Activated B cell treated with CpG ODN at 0.5 μM for 24 hours (primary cell): ENCODE measurements at regions of chr11 and their contacts with region 1.

Region 1: GRCh38 chr11:44538375-44539054 is 26.9 kb upstream of the CD82 start:
- DNase-seq: peak; percentile 67
- ATAC-seq: peak; percentile 97
- H3K4me3 Mint-ChIP-seq: no peak overlapping the region
- H3K27ac Mint-ChIP-seq: no peak overlapping the region
- H3K4me1 Mint-ChIP-seq: peaks cover 3% of the 10 kb centered on the region
- H3K27me3 Mint-ChIP-seq: peaks cover 19% of the 10 kb centered on the region
- CTCF ChIP-seq: peak; percentile 37

Region 2: GRCh38 chr11:44110231-44110679 is 428.3 kb before region 1 on chr11:
- CTCF ChIA-PET with region 1: no interaction called
- POLR2A ChIA-PET with region 1: no interaction called
- intact Hi-C with region 1: loop called (anchors 1 kb)
- DNase-seq: peak; percentile 26
- ATAC-seq: peak; percentile 96
- H3K4me3 Mint-ChIP-seq: no peak overlapping the region
- H3K27ac Mint-ChIP-seq: no peak overlapping the region
- H3K4me1 Mint-ChIP-seq: peaks cover 5% of the 10 kb centered on the region
- H3K27me3 Mint-ChIP-seq: no peaks in the 10 kb centered on the region
- CTCF ChIP-seq: peak; percentile 68

Region 3: GRCh38 chr11:44595964-44596381 is 57.5 kb after region 1 on chr11:
- CTCF ChIA-PET with region 1: no interaction called
- POLR2A ChIA-PET with region 1: no interaction called
- intact Hi-C with region 1: no loop called
- DNase-seq: no peak
- ATAC-seq: no peak
- H3K4me3 Mint-ChIP-seq: peak overlapping the region; percentile 82
- H3K27ac Mint-ChIP-seq: peak overlapping the region; percentile 94
- H3K4me1 Mint-ChIP-seq: peaks cover 95% of the 10 kb centered on the region
- H3K27me3 Mint-ChIP-seq: no peaks in the 10 kb centered on the region
- CTCF ChIP-seq: no peak